HEK293 (cell line): ENCODE measurements at regions of chr18 and their contacts with region 1.

Region 1: DNA sequence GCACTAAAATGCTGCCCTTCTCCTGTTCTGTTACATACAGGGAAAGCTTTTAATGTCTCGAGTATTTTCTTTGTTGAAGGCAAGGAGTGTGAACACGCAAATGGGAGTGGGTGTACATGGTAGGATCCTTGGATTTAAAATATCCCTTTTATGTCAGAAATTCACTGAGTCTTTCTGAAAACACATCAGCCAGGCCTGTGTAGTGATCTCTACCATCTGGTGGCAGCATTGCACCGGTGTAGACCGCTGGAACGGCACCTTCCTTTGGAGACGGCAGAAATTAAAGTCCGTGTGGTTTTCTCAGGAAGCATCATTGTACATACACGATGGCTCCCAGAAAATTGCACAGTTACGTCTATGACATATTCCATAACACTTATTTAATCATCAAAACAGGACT is 515.8 kb downstream of the GALR1 start:
- H3K4me3 ChIP-seq: no peak overlapping the region
- H3K27ac ChIP-seq: no peak overlapping the region
- H3K4me1 ChIP-seq: no peaks in the 10 kb centered on the region
- CTCF ChIP-seq: 0 out of 2 replicates have a peak, but pooled peaks have one; percentile 26

Region 2: DNA sequence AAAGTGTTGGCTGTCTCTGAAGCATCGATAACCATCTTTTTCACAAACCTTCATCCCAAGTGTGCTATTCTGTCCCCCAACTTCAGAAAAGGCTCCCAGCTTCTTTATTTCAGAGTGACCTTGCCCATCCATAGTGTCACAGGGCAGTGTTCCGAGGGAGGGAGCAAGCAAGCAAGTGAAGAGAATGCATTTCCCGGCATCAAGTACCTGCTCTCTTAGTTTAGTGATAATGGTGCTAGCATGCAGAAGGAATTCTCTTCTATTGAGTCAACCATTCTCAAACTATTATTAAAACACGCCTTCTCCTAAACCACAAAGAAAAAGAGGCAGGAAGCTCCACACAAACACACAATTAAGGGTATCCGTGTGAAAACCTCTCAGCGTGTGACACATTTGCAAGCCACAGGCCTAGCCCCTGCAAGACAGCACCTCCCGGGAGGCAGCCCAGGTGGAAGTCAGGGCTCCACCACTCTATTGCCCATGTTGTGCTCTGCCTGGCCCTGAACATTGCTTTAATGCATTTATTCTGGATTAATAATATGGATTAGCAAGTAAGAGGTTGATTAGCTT is 10.9 kb before region 1 on chr18:
- CTCF ChIA-PET with region 1: interaction called, 19 read pairs
- POLR2A ChIA-PET with region 1: no interaction called
- H3K4me3 ChIP-seq: no peak overlapping the region
- H3K27ac ChIP-seq: no peak overlapping the region
- H3K4me1 ChIP-seq: no peaks in the 10 kb centered on the region
- CTCF ChIP-seq: no peak